ENCODE measurements at regions of chr14 and their contacts with region 1.

Region 1: DNA sequence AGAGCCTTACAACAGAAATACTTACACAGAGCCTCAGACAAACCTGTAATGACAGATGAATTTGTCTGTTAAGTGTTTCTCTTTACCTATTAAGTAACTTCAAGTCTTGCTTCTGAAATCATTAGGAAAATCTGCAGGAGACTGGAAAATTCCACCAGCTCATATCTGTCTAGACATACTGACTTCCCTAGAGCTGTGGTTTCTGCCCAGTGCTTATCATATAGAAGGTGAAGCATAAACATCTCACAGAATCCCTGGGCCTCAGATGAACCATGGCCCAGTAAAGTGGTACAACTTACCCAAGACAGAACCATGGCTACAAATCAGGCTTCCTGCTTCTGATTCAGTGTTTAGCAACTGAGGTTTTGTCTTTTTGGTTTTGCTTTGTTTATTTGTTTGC is 91.6 kb downstream of the EGLN3 start:
- DNase-seq: no peak
- H3K4me3 ChIP-seq: no peak overlapping the region
- CTCF ChIP-seq: no peak
- POLR2A ChIP-seq: no peak

Region 2: DNA sequence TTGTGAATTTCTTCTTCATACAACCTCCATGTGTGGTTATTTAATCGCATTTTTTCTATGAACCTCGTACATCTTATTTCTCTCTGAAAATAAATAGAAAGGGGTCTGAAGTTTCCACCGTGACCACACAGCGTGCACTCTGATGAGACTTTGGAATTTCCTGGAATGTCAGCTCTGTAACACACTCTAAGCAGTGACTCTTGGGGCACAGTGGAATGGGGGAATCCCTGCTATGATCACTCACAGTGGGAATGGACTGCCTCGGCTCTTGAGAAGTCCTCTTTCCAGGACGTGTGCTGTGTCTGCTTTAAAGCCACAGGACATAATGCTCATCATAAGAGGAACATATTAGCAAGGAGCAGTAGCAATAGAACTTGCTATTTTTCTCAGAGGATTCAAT is 324.7 kb before region 1 on chr14:
- intact Hi-C with region 1: no loop called
- DNase-seq: no peak
- H3K4me3 ChIP-seq: no peak overlapping the region
- CTCF ChIP-seq: no peak
- POLR2A ChIP-seq: no peak

Region 3: DNA sequence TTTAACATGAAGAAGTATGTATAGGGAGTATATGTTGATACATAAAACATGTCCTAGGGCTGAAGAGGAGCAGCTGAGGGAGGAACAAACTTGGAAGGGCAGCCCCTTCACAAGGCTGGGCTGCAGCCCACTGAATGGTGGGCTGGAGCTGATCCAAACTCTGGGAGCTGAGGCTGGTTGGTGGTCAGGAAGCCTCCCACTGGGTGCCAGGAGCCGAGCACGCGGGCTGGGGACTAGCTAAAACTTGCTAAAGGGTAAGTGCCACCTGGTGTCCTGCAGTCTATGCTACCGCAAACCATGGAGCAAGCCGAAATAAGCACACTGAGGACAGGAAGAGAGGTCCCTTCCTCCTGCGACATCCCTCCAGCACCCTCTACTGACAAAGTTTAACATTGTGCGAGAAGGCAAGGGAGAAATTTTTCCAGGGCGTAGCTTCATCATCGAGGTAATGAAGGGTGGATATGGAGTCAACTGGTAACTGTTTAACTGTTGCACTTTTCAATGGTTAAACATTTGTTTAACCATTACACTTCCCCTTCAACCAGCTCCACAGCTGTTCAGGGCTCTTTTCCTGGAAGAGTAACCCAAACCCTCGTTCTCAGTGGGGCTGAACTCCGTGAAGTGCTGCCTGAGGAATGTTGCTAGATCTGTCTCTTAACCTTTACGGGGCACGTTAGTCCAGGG is 49.4 kb after region 1 on chr14:
- intact Hi-C with region 1: loop called (anchors 10 kb)
- DNase-seq: no peak
- H3K4me3 ChIP-seq: no peak overlapping the region
- CTCF ChIP-seq: no peak
- POLR2A ChIP-seq: no peak